ENCODE measurements at regions of chr7 and their contacts with region 1.

Region 1: GRCh38 chr7:116929914-116930913 is 23.1 kb upstream of the ST7 start:
- DNase-seq: peak; percentile 44
- ATAC-seq: peak; percentile 95
- H3K4me3 ChIP-seq: no peak overlapping the region
- H3K27ac ChIP-seq: no peak overlapping the region
- H3K4me1 ChIP-seq: peaks cover 5% of the 10 kb centered on the region
- H3K27me3 ChIP-seq: no peaks in the 10 kb centered on the region
- CTCF ChIP-seq: peak; percentile 83 to 95 (median 88)
- EP300 ChIP-seq: no peak
- POLR2A ChIP-seq: no peak
- RAD21 ChIP-seq: peak; percentile 99

Region 2: DNA sequence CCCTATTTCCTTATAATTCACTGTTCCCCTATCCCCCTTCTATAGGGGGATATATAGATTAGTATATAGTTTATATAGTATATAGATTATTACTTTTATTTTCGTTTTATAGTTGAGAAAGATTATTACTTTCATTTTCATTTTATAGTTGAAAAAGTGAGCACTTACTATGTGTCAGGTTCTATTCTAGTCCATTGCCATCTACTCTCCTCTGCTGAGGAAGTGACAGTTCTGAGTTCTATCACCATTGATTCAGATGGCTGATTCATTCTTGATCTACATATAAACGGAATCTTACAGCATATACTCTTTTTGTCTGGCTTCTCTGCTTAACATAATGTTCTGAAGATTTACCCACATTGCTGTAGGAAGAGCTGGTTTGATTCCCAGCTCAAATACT is 451.4 kb before region 1 on chr7:
- CTCF ChIA-PET with region 1: no interaction called
- POLR2A ChIA-PET with region 1: no interaction called
- RAD21 ChIA-PET with region 1: no interaction called
- SMC1A ChIA-PET with region 1: no interaction called
- in situ Hi-C with region 1: no loop called
- intact Hi-C with region 1: no loop called
- DNase-seq: no peak
- ATAC-seq: 0 out of 3 replicates have a peak, but pooled peaks have one; percentile 25
- H3K4me3 ChIP-seq: no peak overlapping the region
- H3K27ac ChIP-seq: no peak overlapping the region
- H3K4me1 ChIP-seq: no peaks in the 10 kb centered on the region
- H3K27me3 ChIP-seq: no peaks in the 10 kb centered on the region
- CTCF ChIP-seq: no peak
- EP300 ChIP-seq: no peak
- POLR2A ChIP-seq: no peak
- RAD21 ChIP-seq: no peak

Region 3: GRCh38 chr7:116942504-116942903 is 12.3 kb after region 1 on chr7:
- CTCF ChIA-PET with region 1: interaction called, 18 read pairs
- POLR2A ChIA-PET with region 1: no interaction called
- RAD21 ChIA-PET with region 1: interaction called, 3 read pairs
- SMC1A ChIA-PET with region 1: interaction called, 6 read pairs
- in situ Hi-C with region 1: no loop called
- intact Hi-C with region 1: no loop called
- DNase-seq: no peak
- ATAC-seq: no peak
- H3K4me3 ChIP-seq: no peak overlapping the region
- H3K27ac ChIP-seq: no peak overlapping the region
- H3K4me1 ChIP-seq: no peaks in the 10 kb centered on the region
- H3K27me3 ChIP-seq: no peaks in the 10 kb centered on the region; a peak in 1 of 4 replicates
- CTCF ChIP-seq: no peak
- EP300 ChIP-seq: no peak
- POLR2A ChIP-seq: no peak
- RAD21 ChIP-seq: no peak

Region 4: GRCh38 chr7:117014673-117015133 is 84.5 kb after region 1 on chr7:
- CTCF ChIA-PET with region 1: interaction called, 19 read pairs
- POLR2A ChIA-PET with region 1: interaction called, 5 read pairs
- RAD21 ChIA-PET with region 1: interaction called, 7 read pairs
- SMC1A ChIA-PET with region 1: interaction called, 5 read pairs
- in situ Hi-C with region 1: no loop called
- intact Hi-C with region 1: loop called (anchors 1 kb)
- DNase-seq: no peak
- ATAC-seq: peak; percentile 52
- H3K4me3 ChIP-seq: peak overlapping the region; percentile 66; the same call in 1 of the 2 replicates
- H3K27ac ChIP-seq: peak overlapping the region; percentile 79
- H3K4me1 ChIP-seq: peaks cover 43% of the 10 kb centered on the region
- H3K27me3 ChIP-seq: no peaks in the 10 kb centered on the region
- CTCF ChIP-seq: no peak
- EP300 ChIP-seq: no peak
- POLR2A ChIP-seq: peak; percentile 51; the same call in 1 of the 2 replicates
- RAD21 ChIP-seq: no peak

Region 5: GRCh38 chr7:117134889-117135552 is 204.8 kb after region 1 on chr7:
- CTCF ChIA-PET with region 1: interaction called, 30 read pairs
- POLR2A ChIA-PET with region 1: no interaction called
- RAD21 ChIA-PET with region 1: interaction called, 7 read pairs
- SMC1A ChIA-PET with region 1: interaction called, 6 read pairs
- in situ Hi-C with region 1: no loop called
- intact Hi-C with region 1: no loop called
- DNase-seq: no peak
- ATAC-seq: peak; percentile 38
- H3K4me3 ChIP-seq: no peak overlapping the region
- H3K27ac ChIP-seq: peak overlapping the region; percentile 46; the same call in 1 of the 2 replicates
- H3K4me1 ChIP-seq: peaks cover 9% of the 10 kb centered on the region; the same call in 1 of the 2 replicates
- H3K27me3 ChIP-seq: no peaks in the 10 kb centered on the region
- CTCF ChIP-seq: no peak
- EP300 ChIP-seq: no peak
- POLR2A ChIP-seq: no peak
- RAD21 ChIP-seq: no peak

Measured in GM12878 (cell line).